Activated T-helper 2 cell treated with anti-CD3 and anti-CD28 coated beads, Interferon-gamma antibody, Interleukin-2, Interleukin-4, amounts not matched to agents 10 μg/mL and 5 μg/mL and 100 μg/mL, durations not matched to agents 14 hours and 24 hours and 36 hours (primary cell): ENCODE measurements at regions of chr6 and their contacts with region 1.

Region 1: DNA sequence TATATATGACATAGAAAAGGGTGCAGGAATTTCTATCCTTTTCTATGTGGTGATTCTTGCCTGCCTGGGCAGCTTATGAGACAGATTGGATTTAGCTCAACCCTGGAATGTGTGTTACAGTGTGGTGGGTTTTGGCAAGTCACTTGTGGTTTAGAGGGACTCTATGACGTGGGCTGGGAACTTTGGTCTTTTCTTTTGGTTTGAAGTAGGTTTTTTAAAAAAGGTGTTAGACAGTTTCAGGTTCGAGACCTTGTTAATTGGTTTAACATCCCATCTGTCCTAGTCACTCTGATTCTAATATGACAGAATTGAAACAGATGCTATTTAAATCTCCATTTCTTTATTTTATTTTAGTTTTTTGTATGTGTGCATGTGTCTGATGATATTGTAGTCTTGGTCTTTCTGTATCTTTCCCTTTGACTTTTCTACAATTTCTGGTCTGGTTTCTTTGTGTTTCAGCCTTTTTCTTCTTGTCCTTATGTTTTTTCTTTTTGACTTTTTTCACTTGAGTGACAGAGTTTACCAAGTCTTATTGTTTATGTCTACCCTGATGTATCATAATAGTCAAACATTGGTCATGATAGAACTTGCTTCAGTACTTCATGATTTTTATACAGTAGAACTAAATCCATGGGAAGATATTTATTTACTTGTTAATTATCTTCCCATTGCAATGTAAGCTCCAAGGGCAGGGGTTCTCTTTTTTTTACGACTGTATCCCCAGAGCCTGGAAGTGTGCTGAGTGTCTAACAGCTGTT is 174.3 kb downstream of the CDKAL1 start:
- DNase-seq: no peak
- H3K4me3 Mint-ChIP-seq: no peak overlapping the region
- H3K27ac Mint-ChIP-seq: peak overlapping the region; percentile 38
- H3K4me1 Mint-ChIP-seq: peaks cover 62% of the 10 kb centered on the region
- H3K27me3 Mint-ChIP-seq: no peaks in the 10 kb centered on the region

Region 2: GRCh38 chr6:20696676-20697075 is 11.9 kb before region 1 on chr6:
- intact Hi-C with region 1: loop called (anchors 2 kb)
- DNase-seq: no peak
- H3K4me3 Mint-ChIP-seq: no peak overlapping the region
- H3K27ac Mint-ChIP-seq: no peak overlapping the region
- H3K4me1 Mint-ChIP-seq: peaks cover 40% of the 10 kb centered on the region
- H3K27me3 Mint-ChIP-seq: no peaks in the 10 kb centered on the region